CD4-positive, alpha-beta memory T cell (primary cell): ENCODE measurements at regions of chr6 and their contacts with region 1.

Region 1: DNA sequence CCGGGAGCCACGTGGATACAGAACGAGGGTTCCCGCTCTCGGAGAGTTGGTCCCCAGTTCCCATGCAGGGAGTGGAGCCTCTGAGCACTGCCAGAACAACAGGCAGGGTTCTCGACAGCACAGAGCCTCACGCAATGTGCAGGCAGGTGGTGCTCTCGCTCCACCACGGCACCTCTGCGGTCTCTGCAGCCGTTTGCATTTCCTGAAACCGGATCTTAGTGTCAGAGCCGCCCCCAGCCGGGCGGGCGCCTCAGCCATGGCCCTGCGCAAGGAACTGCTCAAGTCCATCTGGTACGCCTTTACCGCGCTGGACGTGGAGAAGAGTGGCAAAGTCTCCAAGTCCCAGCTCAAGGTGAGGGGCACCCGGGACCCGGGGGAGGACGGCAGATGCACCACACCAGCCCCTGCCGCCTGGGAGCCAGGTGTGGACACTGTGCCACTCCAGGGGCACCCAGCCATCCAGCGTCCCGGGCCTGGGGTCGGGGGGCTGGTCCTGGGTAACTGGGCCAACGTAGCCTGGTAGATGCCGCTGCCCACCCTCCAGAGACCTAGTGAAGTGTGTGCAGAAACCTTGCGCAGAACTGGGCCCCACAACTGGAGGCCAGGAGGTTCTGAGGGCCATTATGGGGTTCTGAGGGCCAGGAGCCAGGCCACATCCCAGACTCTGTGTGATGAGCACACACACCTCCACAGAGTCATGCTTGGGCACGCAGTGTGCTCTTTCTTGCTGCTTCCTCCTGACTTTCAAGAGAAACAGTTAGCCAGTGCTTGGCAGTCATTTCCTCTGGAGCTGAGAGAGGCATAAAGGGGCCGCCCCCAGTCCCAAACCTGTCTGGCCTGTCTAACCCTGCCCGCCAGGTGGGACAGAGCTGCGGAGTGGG is at the start of gene DEF6:
- DNase-seq: peak; percentile 85 to 89 (median 86)
- H3K4me3 ChIP-seq: peak within 1 kb of the TSS; percentile 90 to 95
- H3K4me3 Mint-ChIP-seq: peak within 1 kb of the TSS; percentile 80 to 96 (median 94)
- H3K27ac ChIP-seq: peak within 1 kb of the TSS; percentile 88
- H3K27ac Mint-ChIP-seq: peak within 1 kb of the TSS; percentile 91 to 99 (median 98)
- H3K4me1 ChIP-seq: peaks cover 49% of the 10 kb centered on the region
- H3K4me1 Mint-ChIP-seq: peaks cover 23 to 57% (median 44%) of the 10 kb centered on the region in 4 donors
- H3K27me3 ChIP-seq: no peaks in the 10 kb centered on the region
- H3K27me3 Mint-ChIP-seq: no peaks in the 10 kb centered on the region
- total RNA-seq, gene DEF6: 231 to 236 TPM

Region 2: DNA sequence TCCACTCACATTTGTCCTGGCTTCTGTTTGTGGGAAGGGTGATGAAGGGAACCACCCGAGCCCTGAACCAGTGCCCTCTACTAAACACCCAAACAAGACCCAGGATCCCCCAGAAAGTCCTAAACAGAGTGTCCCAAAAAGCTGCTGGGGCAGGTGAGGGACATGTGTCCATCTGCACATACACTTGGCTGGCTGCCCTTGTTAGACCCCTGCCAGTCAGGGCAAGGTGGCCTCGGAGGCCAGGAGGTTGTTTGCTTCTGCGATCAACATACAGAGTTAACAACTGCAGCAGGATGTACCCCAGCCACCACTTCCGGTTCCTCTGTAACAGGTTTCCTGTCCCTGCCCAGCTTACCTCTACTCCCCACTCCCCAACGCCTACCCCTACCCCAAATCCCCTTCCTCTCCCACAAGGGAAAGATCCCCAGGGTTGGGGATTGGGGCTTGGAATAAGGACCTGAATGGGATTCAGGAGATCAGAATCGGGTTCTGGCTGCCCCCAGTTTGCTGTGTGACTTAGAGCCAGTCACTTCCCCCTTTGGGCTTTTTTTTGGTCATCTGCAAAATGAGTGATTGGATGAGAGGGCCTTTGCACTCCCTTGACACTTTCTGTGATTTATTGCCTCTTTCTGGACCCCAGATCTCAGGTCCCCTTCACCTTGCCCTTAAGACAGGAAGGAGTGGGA is 13.7 kb after region 1 on chr6:
- CTCF ChIA-PET with region 1: interaction called, 38 read pairs
- POLR2A ChIA-PET with region 1: interaction called, 805 read pairs
- intact Hi-C with region 1: loop called (anchors 1 kb)
- DNase-seq: peak; percentile 50 to 77 (median 65)
- H3K4me3 ChIP-seq: peak overlapping the region; percentile 50
- H3K4me3 Mint-ChIP-seq: peak overlapping the region; percentile 83 to 92 (median 85)
- H3K27ac ChIP-seq: peak overlapping the region; percentile 78
- H3K27ac Mint-ChIP-seq: peak overlapping the region; percentile 96 to 99 (median 98)
- H3K4me1 ChIP-seq: peaks cover 93% of the 10 kb centered on the region
- H3K4me1 Mint-ChIP-seq: peaks cover 65 to 98% (median 87%) of the 10 kb centered on the region in 4 donors
- H3K27me3 ChIP-seq: no peaks in the 10 kb centered on the region
- H3K27me3 Mint-ChIP-seq: no peaks in the 10 kb centered on the region

Region 3: GRCh38 chr6:35327349-35328027 is 29.6 kb after region 1 on chr6:
- CTCF ChIA-PET with region 1: interaction called, 429 read pairs
- POLR2A ChIA-PET with region 1: interaction called, 805 read pairs
- intact Hi-C with region 1: loop called (anchors 1 kb)
- DNase-seq: peak; percentile 72 to 82 (median 74)
- H3K4me3 ChIP-seq: no peak overlapping the region
- H3K4me3 Mint-ChIP-seq: peak overlapping the region in 5 of 8 donors; percentile 15 to 62 (median 44)
- H3K27ac ChIP-seq: no peak overlapping the region
- H3K27ac Mint-ChIP-seq: peak overlapping the region; percentile 19 to 95 (median 82)
- H3K4me1 ChIP-seq: peaks cover 24% of the 10 kb centered on the region
- H3K4me1 Mint-ChIP-seq: peaks cover 16 to 25% (median 20%) of the 10 kb centered on the region in 4 donors
- H3K27me3 ChIP-seq: no peaks in the 10 kb centered on the region
- H3K27me3 Mint-ChIP-seq: no peaks in the 10 kb centered on the region

Region 4: DNA sequence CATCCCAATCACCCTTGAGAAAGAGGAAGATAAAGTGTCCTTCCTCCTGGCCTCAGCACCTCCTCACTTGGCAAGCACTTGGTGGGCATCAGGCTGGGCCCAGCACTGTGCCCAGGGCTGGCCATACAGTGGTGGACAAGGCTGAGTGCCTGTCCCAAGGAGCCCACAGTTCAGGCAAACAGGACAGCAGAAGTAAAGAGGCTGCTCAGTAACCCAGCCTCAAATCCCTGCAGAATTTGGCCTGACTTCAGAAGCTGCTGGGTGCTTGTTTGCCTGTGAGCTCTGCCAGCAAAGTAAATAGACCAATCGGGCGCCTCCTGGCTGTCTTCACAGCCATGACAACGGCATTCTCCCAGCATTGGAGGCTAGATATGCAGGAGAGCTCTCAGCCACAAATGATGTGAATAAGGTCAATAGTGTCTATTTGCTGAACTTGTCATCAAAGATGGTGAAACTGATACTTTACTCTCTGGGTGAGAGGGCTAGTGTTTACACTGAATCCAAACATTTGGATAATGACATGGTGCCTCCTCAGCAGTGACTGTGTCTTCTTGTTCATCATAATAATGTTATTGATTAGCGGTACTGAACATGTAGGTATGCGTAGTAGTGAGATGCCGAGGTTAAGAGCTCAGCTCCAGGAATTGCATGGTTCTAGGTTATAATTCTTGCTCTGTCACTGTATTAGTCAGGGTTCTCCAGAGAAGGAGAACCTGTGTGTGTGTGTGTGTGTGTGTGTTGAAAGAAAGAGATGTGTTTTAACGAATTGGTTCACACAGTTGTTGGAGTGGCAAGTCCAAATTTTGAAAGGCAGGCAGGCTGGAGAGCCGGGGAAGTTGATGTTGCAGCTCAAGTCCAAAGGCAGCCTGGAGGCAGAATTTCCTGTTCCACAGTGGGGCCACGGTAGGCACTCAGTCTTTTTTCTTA is 117.5 kb after region 1 on chr6:
- CTCF ChIA-PET with region 1: interaction called, 20 read pairs
- POLR2A ChIA-PET with region 1: interaction called, 3 read pairs
- intact Hi-C with region 1: no loop called
- DNase-seq: peak in 4 of 5 donors; percentile 26 to 33 (median 30)
- H3K4me3 ChIP-seq: no peak overlapping the region
- H3K4me3 Mint-ChIP-seq: peak overlapping the region in 1 of 8 donors; percentile 1
- H3K27ac ChIP-seq: no peak overlapping the region
- H3K27ac Mint-ChIP-seq: peak overlapping the region; percentile 26 to 81 (median 74)
- H3K4me1 ChIP-seq: peaks cover 35% of the 10 kb centered on the region
- H3K4me1 Mint-ChIP-seq: peaks cover 31 to 71% (median 48%) of the 10 kb centered on the region in 4 donors
- H3K27me3 ChIP-seq: no peaks in the 10 kb centered on the region
- H3K27me3 Mint-ChIP-seq: no peaks in the 10 kb centered on the region

Region 5: DNA sequence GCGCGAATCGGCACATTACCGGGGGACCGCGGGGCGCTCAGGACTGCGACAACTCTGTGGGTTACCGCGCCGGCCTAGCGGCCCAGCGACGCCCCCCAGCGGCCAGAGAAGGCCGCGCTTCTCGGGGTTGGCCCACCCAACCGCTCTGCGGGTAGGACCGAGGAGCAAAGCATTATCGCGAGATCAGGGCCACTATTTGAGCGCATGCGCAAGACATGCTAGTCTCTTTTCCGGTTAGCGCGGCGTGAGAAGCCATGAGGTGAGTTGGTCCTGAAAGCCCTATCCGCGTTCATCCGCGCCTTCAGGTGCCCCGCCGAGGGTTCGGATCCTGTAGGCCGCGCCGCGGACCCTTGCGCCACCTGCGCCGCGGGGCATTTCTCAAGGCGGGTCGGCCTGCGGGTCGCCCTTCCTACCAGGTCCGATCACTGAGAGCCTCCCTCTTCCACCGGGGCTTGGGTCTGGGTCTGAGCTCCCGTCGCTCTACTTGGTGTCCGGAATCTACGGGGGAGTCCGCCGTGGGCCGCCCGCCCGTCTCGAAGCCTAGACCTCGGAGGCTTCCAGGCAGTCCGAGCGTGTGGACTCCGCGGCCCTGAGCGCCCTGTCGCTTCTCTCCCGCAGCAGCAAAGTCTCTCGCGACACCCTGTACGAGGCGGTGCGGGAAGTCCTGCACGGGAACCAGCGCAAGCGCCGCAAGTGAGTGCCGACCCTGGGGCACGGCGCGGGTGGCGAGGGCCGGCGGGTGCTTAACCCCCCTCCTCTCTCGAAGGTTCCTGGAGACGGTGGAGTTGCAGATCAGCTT is 170.5 kb after region 1 on chr6 and contains the start of gene RPL10A:
- CTCF ChIA-PET with region 1: interaction called, 57 read pairs
- POLR2A ChIA-PET with region 1: interaction called, 59 read pairs
- intact Hi-C with region 1: loop called (anchors 1 kb)
- DNase-seq: peak; percentile 94 to 97 (median 96)
- H3K4me3 ChIP-seq: peak within 1 kb of the TSS; percentile 67 to 100
- H3K4me3 Mint-ChIP-seq: peak within 1 kb of the TSS; percentile 94 to 99 (median 98)
- H3K27ac ChIP-seq: peak within 1 kb of the TSS; percentile 74
- H3K27ac Mint-ChIP-seq: peak within 1 kb of the TSS; percentile 93 to 98 (median 98)
- H3K4me1 ChIP-seq: peaks cover 40% of the 10 kb centered on the region
- H3K4me1 Mint-ChIP-seq: peaks cover 29 to 53% (median 40%) of the 10 kb centered on the region in 4 donors
- H3K27me3 ChIP-seq: no peaks in the 10 kb centered on the region
- H3K27me3 Mint-ChIP-seq: no peaks in the 10 kb centered on the region
- total RNA-seq, gene RPL10A: 1,978 to 2,070 TPM

Region 6: GRCh38 chr6:35532126-35532525 is 234.3 kb after region 1 on chr6:
- CTCF ChIA-PET with region 1: no interaction called
- POLR2A ChIA-PET with region 1: no interaction called
- intact Hi-C with region 1: no loop called
- DNase-seq: no peak
- H3K4me3 ChIP-seq: no peak overlapping the region
- H3K4me3 Mint-ChIP-seq: no peak overlapping the region
- H3K27ac ChIP-seq: no peak overlapping the region
- H3K27ac Mint-ChIP-seq: no peak overlapping the region
- H3K4me1 ChIP-seq: no peaks in the 10 kb centered on the region
- H3K4me1 Mint-ChIP-seq: peaks cover 1 to 18% (median 8%) of the 10 kb centered on the region in 4 donors
- H3K27me3 ChIP-seq: no peaks in the 10 kb centered on the region
- H3K27me3 Mint-ChIP-seq: peaks cover 6 to 8% of the 10 kb centered on the region in 2 donors

Region 7: DNA sequence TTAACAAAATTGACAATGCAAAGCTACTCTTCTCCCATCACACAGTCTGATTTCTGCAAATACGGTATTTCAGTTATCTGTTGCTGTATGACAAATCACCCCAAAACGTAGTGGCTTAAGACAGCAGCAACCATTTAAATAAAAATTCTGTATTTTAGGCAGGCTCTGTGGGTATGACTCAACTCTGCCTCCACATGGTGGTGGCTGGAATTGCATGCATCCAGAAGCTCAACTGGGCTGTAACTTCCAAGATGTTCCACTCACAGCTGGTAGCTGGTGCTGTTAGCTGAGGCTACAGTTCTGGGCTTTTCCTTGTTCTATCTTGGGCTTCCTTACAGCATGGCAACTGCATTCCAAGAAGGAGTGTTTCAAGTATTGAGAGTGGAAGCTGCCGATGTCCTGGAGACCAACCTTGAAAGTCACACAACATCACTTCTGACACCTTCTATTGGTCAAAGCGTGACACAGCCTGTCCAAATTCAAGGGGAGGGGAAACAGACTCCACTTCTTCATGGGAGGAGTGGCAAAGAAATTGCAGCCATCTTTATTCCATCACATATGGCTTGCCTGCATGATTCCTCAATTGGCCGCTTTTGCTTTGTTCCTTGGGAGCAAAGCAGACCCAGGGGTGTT is 254.6 kb after region 1 on chr6:
- CTCF ChIA-PET with region 1: interaction called, 22 read pairs
- POLR2A ChIA-PET with region 1: no interaction called
- intact Hi-C with region 1: loop called (anchors 1 kb)
- DNase-seq: peak in 4 of 5 donors; percentile 56 to 62 (median 60)
- H3K4me3 ChIP-seq: no peak overlapping the region
- H3K4me3 Mint-ChIP-seq: no peak overlapping the region
- H3K27ac ChIP-seq: no peak overlapping the region
- H3K27ac Mint-ChIP-seq: no peak overlapping the region
- H3K4me1 ChIP-seq: no peaks in the 10 kb centered on the region
- H3K4me1 Mint-ChIP-seq: peaks cover 0 to 5% (median 3%) of the 10 kb centered on the region in 4 donors
- H3K27me3 ChIP-seq: no peaks in the 10 kb centered on the region
- H3K27me3 Mint-ChIP-seq: peaks cover 2% of the 10 kb centered on the region in 2 donors

Region 8: DNA sequence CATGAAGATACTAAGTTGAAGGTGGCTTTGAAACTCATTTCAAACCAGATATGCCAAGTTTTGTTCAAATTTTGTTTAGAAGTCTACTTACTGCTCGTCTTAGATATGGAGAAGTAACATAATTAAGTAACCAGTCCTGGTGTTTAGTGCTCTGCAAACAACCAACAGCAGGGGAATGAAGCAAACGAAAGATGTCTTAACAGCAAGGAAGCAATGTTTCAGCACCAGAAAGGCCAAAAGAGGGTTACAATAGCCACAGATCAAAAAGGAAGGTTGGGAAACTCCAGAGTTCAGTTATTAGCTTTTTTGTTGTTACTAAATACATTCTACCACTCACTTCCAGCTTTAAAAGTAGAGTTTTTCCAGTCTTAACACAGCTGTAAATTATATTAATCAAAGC is 552.4 kb after region 1 on chr6:
- CTCF ChIA-PET with region 1: no interaction called
- POLR2A ChIA-PET with region 1: no interaction called
- intact Hi-C with region 1: no loop called
- DNase-seq: no peak
- H3K4me3 ChIP-seq: no peak overlapping the region
- H3K4me3 Mint-ChIP-seq: no peak overlapping the region
- H3K27ac ChIP-seq: no peak overlapping the region
- H3K27ac Mint-ChIP-seq: peak overlapping the region in 1 of 7 donors; percentile 36
- H3K4me1 ChIP-seq: no peaks in the 10 kb centered on the region
- H3K4me1 Mint-ChIP-seq: peaks cover 0 to 3% (median 0%) of the 10 kb centered on the region in 4 donors
- H3K27me3 ChIP-seq: no peaks in the 10 kb centered on the region
- H3K27me3 Mint-ChIP-seq: no peaks in the 10 kb centered on the region